AG04450 (cell line): ENCODE measurements at regions of chr9 and their contacts with region 1.

Region 1: GRCh38 chr9:79610791-79611614 is 39.2 kb downstream of the TLE4 start:
- DNase-seq: peak; percentile 88
- H3K4me3 ChIP-seq: no peak overlapping the region
- H3K27ac ChIP-seq: peak overlapping the region; percentile 77
- H3K27me3 ChIP-seq: no peaks in the 10 kb centered on the region
- CTCF ChIP-seq: no peak

Region 2: DNA sequence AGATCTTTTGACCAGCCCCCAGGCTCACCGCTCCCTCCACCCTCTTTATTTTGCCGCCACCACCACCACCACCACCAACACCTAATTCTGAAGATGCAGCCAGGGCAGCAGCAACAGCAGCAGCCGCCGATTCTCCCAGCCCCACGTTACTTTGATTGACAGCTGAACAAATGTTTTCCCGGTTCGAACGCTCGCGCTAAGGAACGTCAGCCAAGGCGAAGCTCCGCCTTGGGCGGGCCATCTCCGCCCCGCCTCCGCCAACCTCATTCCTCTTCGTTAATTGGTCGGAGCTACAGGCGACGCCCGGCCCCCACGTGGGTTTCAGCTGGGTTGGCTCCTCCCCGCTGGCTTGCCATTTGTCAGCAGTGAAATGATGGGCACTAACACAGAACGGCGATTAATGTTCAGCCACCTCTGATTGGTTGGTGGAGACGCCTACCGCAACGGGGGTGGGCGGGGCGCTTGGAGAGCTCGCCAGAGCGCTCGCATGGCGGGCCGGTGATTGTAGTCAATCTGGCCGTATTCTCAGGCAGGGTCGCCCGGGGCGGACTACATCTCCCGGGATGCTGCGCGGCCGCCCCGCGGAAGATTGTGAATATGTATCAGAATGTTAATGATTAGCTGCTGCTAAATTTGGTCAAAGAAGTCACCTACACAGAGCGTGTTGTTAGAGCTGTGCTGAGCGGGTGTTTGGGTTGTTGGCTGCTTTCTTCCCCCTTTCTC is 39.5 kb before region 1 on chr9 and contains the start of gene TLE4:
- CTCF ChIA-PET with region 1: no interaction called
- POLR2A ChIA-PET with region 1: interaction called, 21 read pairs
- DNase-seq: peak; percentile 100
- H3K4me3 ChIP-seq: peak within 1 kb of the TSS; percentile 79
- H3K27ac ChIP-seq: peak within 1 kb of the TSS; percentile 83
- H3K27me3 ChIP-seq: no peaks in the 10 kb centered on the region
- CTCF ChIP-seq: no peak
- polyA plus RNA-seq, gene TLE4: 42.2 and 53.4 TPM in 2 replicates